Heart right ventricle (tissue), 16 donors: ENCODE measurements at regions of chr1 and their contacts with region 1.

Region 1: DNA sequence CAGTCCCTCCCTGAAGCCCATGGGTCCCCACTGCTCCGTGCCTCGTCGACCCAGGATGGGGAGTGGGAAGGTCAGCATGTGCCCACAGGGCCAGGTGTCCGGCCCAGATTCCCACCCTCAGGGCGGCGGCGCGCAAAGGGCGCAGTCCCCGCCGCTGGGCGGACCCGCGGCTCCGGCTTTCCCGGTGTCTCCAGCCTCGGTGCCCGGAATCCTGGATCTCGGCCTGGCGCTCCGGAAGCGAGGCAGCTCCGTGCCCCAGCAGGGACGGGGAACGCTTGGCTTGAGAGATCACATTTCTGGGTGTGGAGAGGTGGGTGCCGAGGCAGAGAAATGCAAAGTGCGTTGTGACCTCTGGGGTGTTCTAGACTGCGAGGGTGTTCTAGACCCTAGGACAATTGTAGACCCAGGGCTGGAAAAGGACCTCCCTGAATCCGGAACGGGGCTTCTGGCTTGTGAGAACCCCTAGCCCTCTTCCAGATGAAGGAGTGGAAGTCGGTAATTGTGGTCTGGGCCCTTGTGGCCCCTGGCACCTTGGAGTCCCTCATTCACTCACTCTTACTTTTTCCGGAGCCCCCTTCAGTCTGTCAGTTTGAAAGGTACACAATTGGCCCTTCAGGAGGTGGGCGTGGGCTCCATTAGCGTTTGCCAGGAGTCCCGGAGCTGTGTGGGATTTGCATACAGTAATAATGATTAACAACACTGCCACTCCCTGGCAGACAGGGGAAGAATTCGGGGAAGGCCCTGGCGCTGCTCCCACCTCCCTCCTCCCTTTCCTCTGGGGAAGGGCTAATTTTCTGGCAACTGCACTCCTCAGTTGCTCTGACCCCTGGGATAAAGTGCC is 1.6 kb upstream of the KCND3 start:
- DNase-seq: peak; percentile 77
- ATAC-seq: peak; percentile 60 to 83 (median 76)
- H3K4me3 ChIP-seq: peak overlapping the region; percentile 25 to 70 (median 62)
- H3K27ac ChIP-seq: peak overlapping the region; percentile 36 to 91 (median 79)
- H3K4me1 ChIP-seq: peaks cover 6 to 59% (median 35%) of the 10 kb centered on the region in 9 donors
- H3K27me3 ChIP-seq: peaks cover 0 to 68% (median 14%) of the 10 kb centered on the region in 7 donors
- CTCF ChIP-seq: peak in 8 of 9 donors; percentile 15 to 67 (median 39)

Region 2: DNA sequence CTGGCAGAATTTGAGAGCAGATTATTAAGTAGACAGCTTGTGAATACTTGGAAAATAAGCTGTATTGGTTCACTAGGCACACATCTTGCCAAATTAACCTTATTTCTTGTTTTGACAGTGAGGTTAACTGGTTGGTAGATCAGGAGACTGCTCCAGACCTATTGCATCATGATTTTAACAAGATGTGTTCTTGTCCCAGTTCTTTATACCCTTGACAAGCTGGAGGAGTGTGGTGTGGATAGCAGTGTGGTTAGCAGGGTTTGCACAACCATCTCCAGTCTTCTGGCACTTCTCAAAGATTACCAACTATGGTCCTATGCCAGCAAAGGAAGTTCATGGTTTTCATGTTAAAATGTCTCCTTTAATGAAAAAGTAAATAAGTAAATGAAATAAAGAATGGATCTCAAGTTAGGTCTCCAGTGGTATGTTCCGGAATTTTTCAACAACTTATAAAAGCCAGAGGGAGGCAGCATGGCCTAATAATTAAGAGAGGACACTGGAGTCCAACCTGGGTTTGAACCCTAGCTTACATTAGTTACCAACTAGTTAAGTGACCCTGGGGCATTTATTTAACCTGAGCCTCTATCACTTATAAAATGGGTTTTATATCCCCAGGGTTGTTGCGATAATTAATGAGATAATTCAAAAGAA is 201.3 kb before region 1 on chr1:
- intact Hi-C with region 1: loop called in 2 of 10 experiments (anchors 5 to 10 kb)
- DNase-seq: no peak
- ATAC-seq: peak in 4 of 8 donors; percentile 39 to 49 (median 43)
- H3K4me3 ChIP-seq: no peak overlapping the region
- H3K27ac ChIP-seq: no peak overlapping the region
- H3K4me1 ChIP-seq: peaks cover 0 to 16% (median 0%) of the 10 kb centered on the region in 9 donors
- H3K27me3 ChIP-seq: no peaks in the 10 kb centered on the region
- CTCF ChIP-seq: peak in 4 of 9 donors; percentile 30 to 40 (median 34)

Region 3: GRCh38 chr1:111801071-111801841 is 189.8 kb before region 1 on chr1:
- intact Hi-C with region 1: loop called in 8 of 10 experiments (anchors 2 to 10 kb)
- DNase-seq: peak; percentile 37 to 65
- ATAC-seq: peak; percentile 85 to 94 (median 91)
- H3K4me3 ChIP-seq: no peak overlapping the region
- H3K27ac ChIP-seq: peak overlapping the region; percentile 38 to 80 (median 64)
- H3K4me1 ChIP-seq: peaks cover 0 to 27% (median 9%) of the 10 kb centered on the region in 9 donors
- H3K27me3 ChIP-seq: no peaks in the 10 kb centered on the region
- CTCF ChIP-seq: peak in 6 of 9 donors; percentile 6 to 33 (median 21)

Region 4: GRCh38 chr1:111904478-111905218 is 86.5 kb before region 1 on chr1:
- intact Hi-C with region 1: loop called in 1 of 10 experiments (anchors 10 kb)
- DNase-seq: peak; percentile 24 to 48
- ATAC-seq: peak; percentile 71 to 95 (median 90)
- H3K4me3 ChIP-seq: no peak overlapping the region
- H3K27ac ChIP-seq: peak overlapping the region in 7 of 10 donors; percentile 10 to 72 (median 49)
- H3K4me1 ChIP-seq: peaks cover 0 to 39% (median 19%) of the 10 kb centered on the region in 9 donors
- H3K27me3 ChIP-seq: peaks cover 0 to 5% (median 0%) of the 10 kb centered on the region in 7 donors
- CTCF ChIP-seq: peak in 1 of 9 donors; percentile 27

Region 5: DNA sequence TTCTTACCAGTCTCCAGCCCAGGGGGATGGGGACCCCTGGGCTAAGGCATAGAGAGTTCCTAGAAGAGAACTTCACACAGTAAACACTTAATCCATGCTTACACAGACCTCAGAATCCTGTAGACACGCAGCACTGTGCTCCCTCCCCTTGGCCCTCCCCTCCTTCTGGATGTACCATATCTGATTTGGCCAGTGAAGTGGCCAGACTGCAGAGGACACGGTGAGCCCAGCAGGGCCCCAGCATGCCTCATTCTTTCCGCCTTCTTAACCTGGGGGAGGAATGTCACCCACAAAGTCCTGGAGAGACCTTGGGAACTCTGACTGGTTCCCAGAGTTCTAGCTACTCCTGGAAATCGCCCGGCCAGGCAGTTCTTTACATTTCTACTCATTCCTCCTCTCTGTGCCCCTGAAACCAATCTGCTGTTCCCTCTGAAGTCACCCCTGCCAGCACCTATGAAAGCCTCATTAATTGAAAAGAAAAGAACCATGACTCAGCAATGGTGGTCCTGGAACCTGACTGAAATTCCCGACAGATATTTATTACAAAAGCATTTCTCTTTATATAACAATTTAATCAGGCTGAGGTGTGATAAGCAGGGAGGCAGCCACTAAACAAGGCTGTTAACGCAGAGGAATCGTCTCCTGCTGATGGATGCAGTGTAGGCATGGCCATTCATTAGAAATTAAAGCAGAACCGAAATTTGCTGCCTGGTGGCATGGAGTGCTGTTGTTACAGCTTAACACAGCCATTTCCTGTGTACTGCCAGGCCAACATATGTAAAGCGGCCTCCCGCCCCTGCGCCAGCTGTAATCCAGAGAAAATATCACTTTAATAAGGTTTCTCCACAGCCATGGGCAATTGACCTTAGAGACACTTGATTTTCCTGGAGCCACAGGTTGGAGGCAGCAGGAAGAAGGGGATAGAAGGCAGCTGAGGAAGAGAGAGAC is 73.0 kb after region 1 on chr1:
- intact Hi-C with region 1: loop called in 1 of 10 experiments (anchors 5 kb)
- DNase-seq: no peak
- ATAC-seq: peak in 7 of 8 donors; percentile 25 to 83 (median 78)
- H3K4me3 ChIP-seq: no peak overlapping the region
- H3K27ac ChIP-seq: no peak overlapping the region
- H3K4me1 ChIP-seq: peaks cover 0 to 10% (median 0%) of the 10 kb centered on the region in 9 donors
- H3K27me3 ChIP-seq: peaks cover 0 to 6% (median 0%) of the 10 kb centered on the region in 7 donors
- CTCF ChIP-seq: no peak

Region 6: DNA sequence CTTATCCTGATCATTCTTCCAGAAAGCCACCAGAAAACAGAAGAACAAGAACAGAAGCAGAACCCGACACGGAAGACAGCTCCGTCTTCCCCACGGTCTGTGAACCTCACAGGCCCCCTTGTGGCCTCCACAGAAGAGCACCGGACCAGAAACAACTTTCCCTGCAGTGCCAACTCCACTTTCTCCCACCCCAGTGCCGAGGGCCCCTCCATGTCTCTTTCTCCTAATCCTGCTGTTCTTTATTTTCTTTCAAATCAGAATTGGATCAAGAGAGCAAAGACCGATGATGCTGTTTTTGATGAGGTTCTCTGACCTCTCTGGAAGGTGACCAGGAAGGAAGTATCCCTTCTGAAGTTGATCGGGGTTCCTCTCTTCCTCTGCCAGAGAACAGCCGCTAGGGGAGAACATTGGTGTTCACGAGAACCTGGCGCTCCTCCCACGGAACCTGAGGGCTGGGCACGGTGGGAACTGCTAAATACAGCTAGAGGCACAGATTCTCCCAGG is 346.0 kb after region 1 on chr1:
- intact Hi-C with region 1: loop called in 7 of 10 experiments (anchors 2 to 10 kb)
- DNase-seq: peak; percentile 36 to 51
- ATAC-seq: peak; percentile 68 to 91 (median 84)
- H3K4me3 ChIP-seq: peak overlapping the region in 1 of 10 donors; percentile 31
- H3K27ac ChIP-seq: no peak overlapping the region
- H3K4me1 ChIP-seq: peaks cover 0 to 8% (median 3%) of the 10 kb centered on the region in 9 donors
- H3K27me3 ChIP-seq: peaks cover 0 to 4% (median 0%) of the 10 kb centered on the region in 7 donors
- CTCF ChIP-seq: peak; percentile 53 to 80 (median 73)